BJ (cell line): ENCODE measurements at regions of chr3 and their contacts with region 1.

Region 1: DNA sequence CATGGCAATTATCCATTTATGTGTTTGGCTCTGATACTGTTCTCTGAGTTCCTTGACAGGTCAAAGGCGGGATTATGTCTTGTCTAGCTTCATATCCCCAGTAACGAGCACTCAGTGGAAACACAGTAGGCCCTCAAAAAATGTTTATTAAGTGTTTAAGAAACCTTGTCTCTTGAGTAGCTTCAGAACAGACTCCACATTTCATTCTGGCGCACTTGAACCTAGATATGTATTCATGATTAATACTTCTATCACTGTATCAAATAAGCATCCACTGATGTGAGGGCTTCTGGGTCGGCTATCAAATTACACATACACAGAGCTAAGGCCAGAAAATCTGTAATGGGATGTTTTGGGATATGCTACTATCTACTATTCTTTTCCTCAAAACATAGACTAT is 4.6 kb downstream of the CBLB start:
- DNase-seq: no peak
- H3K4me3 ChIP-seq: no peak overlapping the region
- H3K27me3 ChIP-seq: no peaks in the 10 kb centered on the region
- CTCF ChIP-seq: no peak

Region 2: GRCh38 chr3:106193876-106194275 is 329.7 kb after region 1 on chr3:
- CTCF ChIA-PET with region 1: no interaction called
- POLR2A ChIA-PET with region 1: interaction called, 10 read pairs
- DNase-seq: no peak
- H3K4me3 ChIP-seq: no peak overlapping the region
- H3K27me3 ChIP-seq: no peaks in the 10 kb centered on the region
- CTCF ChIP-seq: no peak